HCT116 (cell line): ENCODE measurements at regions of chr3 and their contacts with region 1.

Region 1: DNA sequence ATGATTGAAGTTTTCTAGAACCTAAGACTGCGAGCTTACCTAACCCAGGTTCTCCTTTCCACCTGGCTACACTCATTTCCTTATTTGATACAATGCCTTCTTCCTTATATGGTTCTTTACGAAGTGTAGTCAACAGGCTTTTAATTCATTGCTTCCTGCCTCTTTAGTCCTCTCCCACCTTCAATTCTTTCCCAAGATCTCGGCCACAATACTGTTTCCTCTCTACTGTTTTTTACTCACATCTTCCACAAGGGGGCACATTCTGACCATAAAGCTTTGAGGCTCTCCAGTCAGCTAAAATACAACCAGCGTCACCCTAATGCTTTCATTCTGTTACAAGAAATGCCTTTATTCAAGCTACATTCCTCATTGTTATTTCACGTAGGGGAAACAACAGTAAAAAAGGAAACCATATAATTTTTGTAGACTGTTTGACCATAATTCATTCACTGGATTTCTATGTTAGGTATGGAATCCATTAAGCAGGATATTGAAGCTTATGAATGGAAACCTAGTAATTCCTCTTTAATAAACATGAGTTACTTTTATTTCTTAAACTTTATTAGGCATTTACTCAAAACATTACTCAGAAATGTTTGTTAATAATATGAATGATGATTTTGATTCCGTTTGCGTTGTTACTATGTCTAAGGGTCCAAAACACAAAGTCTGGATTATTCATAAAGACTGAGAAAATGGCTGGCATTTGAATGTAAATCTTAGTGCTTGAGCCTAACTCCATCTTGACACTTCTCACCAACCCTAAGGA is 29.5 kb upstream of the VEPH1 start:
- DNase-seq: peak; percentile 65
- ATAC-seq: peak; percentile 95
- H3K4me3 ChIP-seq: no peak overlapping the region
- H3K27ac ChIP-seq: no peak overlapping the region
- H3K4me1 ChIP-seq: peaks cover 0 to 7% of the 10 kb centered on the region in 2 experiments; a peak in 2 of 4 replicates
- H3K27me3 ChIP-seq: no peaks in the 10 kb centered on the region
- CTCF ChIP-seq: peak; percentile 73 to 91 (median 85)
- POLR2A ChIP-seq: no peak
- RAD21 ChIP-seq: peak; percentile 90

Region 2: DNA sequence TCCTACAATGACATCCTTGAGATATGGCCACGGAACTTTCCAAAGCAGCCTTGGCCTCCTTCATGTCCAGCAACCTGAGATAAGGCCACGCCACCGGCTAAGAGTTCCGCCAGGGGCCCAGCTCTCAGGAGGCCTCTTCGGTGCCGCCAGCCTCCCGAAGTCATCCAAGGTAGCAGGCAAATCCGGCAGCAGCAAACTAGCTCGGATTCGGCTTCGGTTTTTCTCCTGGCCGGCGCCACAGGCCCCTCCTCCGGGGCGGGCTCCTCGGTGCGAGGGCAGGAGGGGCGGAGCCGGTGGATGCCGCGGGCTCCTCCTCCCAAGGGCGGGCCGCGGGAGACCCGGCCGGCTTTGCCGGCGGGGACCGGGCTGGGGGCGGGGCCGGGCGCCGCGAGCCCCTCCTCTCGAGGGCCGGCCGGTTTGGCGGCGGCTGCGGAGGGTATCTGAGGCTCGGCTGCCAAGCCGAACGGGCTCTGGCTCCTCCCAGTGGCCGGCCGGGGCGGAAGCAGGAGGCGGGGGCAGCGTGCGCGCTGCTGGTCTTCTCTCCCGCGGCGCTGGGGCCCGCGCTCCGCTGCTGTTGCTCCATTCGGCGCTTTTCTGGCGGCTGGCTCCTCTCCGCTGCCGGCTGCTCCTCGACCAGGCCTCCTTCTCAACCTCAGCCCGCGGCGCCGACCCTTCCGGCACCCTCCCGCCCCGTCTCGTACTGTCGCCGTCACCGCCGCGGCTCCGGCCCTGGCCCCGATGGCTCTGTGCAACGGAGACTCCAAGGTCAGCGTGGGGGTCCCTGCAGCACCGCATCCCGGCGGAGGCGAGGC is 1662.4 kb before region 1 on chr3 and contains the start of gene GMPS:
- CTCF ChIA-PET with region 1: no interaction called
- POLR2A ChIA-PET with region 1: no interaction called
- RAD21 ChIA-PET with region 1: no interaction called
- intact Hi-C with region 1: no loop called
- DNase-seq: peak; percentile 76
- ATAC-seq: peak; percentile 89
- H3K4me3 ChIP-seq: peak within 1 kb of the TSS; percentile 87 to 98
- H3K27ac ChIP-seq: peak within 1 kb of the TSS; percentile 90
- H3K4me1 ChIP-seq: peaks cover 0 to 25% of the 10 kb centered on the region in 2 experiments; a peak in 3 of 4 replicates
- H3K27me3 ChIP-seq: no peaks in the 10 kb centered on the region
- CTCF ChIP-seq: peak; percentile 5 to 26 (median 22); a peak in 1 of 6 replicates
- POLR2A ChIP-seq: peak; percentile 37
- RAD21 ChIP-seq: peak; percentile 67
- total RNA-seq, gene GMPS: 119 TPM

Region 3: GRCh38 chr3:157572559-157573270 is 40.0 kb after region 1 on chr3:
- CTCF ChIA-PET with region 1: interaction called, 103 read pairs
- POLR2A ChIA-PET with region 1: interaction called, 3 read pairs
- RAD21 ChIA-PET with region 1: interaction called, 8 to 11 read pairs
- intact Hi-C with region 1: loop called (anchors 1 kb)
- DNase-seq: peak; percentile 50
- ATAC-seq: peak; percentile 95
- H3K4me3 ChIP-seq: no peak overlapping the region
- H3K27ac ChIP-seq: no peak overlapping the region
- H3K4me1 ChIP-seq: no peaks in the 10 kb centered on the region
- H3K27me3 ChIP-seq: no peaks in the 10 kb centered on the region
- CTCF ChIP-seq: peak; percentile 56 to 93 (median 65); a peak in 5 of 6 replicates
- POLR2A ChIP-seq: no peak
- RAD21 ChIP-seq: peak; percentile 69

Region 4: GRCh38 chr3:157594413-157594812 is 61.7 kb after region 1 on chr3:
- CTCF ChIA-PET with region 1: interaction called, 12 read pairs
- POLR2A ChIA-PET with region 1: no interaction called
- RAD21 ChIA-PET with region 1: no interaction called
- intact Hi-C with region 1: no loop called
- DNase-seq: no peak
- ATAC-seq: peak; percentile 72
- H3K4me3 ChIP-seq: no peak overlapping the region
- H3K27ac ChIP-seq: no peak overlapping the region
- H3K4me1 ChIP-seq: no peaks in the 10 kb centered on the region
- H3K27me3 ChIP-seq: no peaks in the 10 kb centered on the region
- CTCF ChIP-seq: peak in 1 of 3 experiments; percentile 37; a peak in 1 of 6 replicates
- POLR2A ChIP-seq: no peak
- RAD21 ChIP-seq: no peak

Region 5: DNA sequence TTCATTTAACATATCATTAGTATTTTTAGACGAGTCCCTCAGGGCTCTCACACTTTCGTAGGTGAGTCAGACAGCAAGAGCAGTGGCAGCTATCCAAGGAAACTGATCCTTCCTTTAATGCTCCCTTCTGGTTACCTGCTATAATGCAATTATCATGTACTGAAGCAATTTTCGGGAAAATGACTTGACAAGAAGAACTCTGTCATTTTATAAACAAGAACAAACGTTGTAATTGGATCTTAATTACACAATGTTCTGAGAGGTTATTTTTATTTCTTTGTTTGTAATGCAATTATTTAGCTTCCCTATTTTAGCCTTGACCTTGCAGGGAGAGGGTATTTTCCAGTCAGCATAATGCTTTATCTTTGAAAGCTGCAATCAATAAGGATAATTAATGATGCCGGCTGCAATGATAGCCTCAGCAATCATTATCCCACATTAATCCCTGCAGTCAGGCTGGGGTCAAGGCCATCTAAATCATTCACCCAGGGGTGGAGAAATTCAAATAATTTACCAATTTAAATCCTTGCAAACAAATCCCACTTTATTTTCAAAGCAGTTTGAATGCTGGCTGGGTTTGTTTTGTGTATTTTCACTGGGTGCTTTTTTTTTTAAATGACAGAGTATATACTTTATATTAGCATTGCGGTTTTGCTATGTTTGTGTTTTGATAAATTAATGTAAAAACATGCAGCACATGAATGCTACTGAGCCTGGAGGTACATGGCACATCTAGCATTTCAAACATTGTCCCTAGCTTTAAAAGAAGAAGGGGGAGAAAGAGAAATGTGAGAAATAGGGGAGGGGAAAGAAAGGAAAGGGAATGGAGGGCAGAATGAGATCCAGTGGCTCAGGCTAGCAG is 323.6 kb after region 1 on chr3:
- CTCF ChIA-PET with region 1: no interaction called
- POLR2A ChIA-PET with region 1: no interaction called
- RAD21 ChIA-PET with region 1: no interaction called
- intact Hi-C with region 1: no loop called
- DNase-seq: peak; percentile 12
- ATAC-seq: peak; percentile 65
- H3K4me3 ChIP-seq: no peak overlapping the region
- H3K27ac ChIP-seq: no peak overlapping the region
- H3K4me1 ChIP-seq: peaks cover 3 to 11% of the 10 kb centered on the region in 2 experiments; a peak in 3 of 4 replicates
- H3K27me3 ChIP-seq: no peaks in the 10 kb centered on the region
- CTCF ChIP-seq: 0 out of 6 replicates have a peak, but pooled peaks of 1 of the 3 experiments have one; percentile 6
- POLR2A ChIP-seq: no peak
- RAD21 ChIP-seq: peak; percentile 36

Region 6: DNA sequence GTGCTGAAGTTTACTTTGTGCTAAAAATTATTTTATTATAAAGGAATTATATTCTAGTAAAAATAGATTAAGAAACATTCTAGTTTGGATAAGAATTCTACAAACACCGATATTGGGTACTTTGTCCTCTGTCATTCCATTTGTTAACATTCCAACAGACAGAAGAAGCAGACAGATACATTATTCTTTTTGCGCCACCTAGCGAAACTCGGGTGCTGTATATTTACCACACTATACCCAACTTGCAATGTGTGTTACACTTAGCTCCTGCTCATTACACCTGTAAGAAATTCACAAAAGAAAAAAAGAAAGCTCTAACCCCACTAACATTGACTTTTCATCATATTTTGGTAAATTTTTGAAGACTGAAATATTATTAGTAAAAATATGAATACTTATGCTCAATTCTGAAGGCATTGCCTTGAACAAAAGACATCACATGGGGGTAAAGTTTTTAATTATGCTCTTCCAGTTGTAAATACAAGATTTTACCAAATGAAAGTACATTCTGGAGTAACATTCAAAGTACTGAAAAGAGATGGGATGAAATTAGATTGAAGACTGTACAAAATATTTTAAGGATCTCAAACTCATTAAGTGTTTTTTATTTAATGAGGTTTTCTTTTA is 901.8 kb after region 1 on chr3:
- CTCF ChIA-PET with region 1: interaction called, 19 read pairs
- POLR2A ChIA-PET with region 1: no interaction called
- RAD21 ChIA-PET with region 1: no interaction called
- intact Hi-C with region 1: loop called (anchors 1 kb)
- DNase-seq: peak; percentile 37
- ATAC-seq: peak; percentile 87
- H3K4me3 ChIP-seq: no peak overlapping the region
- H3K27ac ChIP-seq: no peak overlapping the region
- H3K4me1 ChIP-seq: no peaks in the 10 kb centered on the region
- H3K27me3 ChIP-seq: no peaks in the 10 kb centered on the region
- CTCF ChIP-seq: peak; percentile 62 to 77 (median 70); a peak in 5 of 6 replicates
- POLR2A ChIP-seq: no peak
- RAD21 ChIP-seq: peak; percentile 81

Region 7: GRCh38 chr3:158532099-158532734 is 999.5 kb after region 1 on chr3:
- CTCF ChIA-PET with region 1: interaction called, 18 read pairs
- POLR2A ChIA-PET with region 1: no interaction called
- RAD21 ChIA-PET with region 1: interaction called in 1 of 2 experiments, 5 read pairs
- intact Hi-C with region 1: loop called (anchors 1 kb)
- DNase-seq: peak; percentile 41
- ATAC-seq: peak; percentile 62; the same call in 1 of the 2 replicates
- H3K4me3 ChIP-seq: no peak overlapping the region
- H3K27ac ChIP-seq: no peak overlapping the region
- H3K4me1 ChIP-seq: no peaks in the 10 kb centered on the region
- H3K27me3 ChIP-seq: no peaks in the 10 kb centered on the region
- CTCF ChIP-seq: peak; percentile 54 to 67 (median 63); a peak in 5 of 6 replicates
- POLR2A ChIP-seq: no peak
- RAD21 ChIP-seq: peak; percentile 80